PC-9 (cell line): ENCODE measurements at regions of chr5 and their contacts with region 1.

Region 1: GRCh38 chr5:171521219-171521633 is 101.8 kb downstream of the FGF18 start:
- DNase-seq: peak; percentile 82 to 96
- H3K4me3 ChIP-seq: peak overlapping the region; percentile 47; the same call in 1 of the 2 replicates
- H3K27ac ChIP-seq: peak overlapping the region; percentile 98
- H3K4me1 ChIP-seq: peaks cover 48% of the 10 kb centered on the region
- H3K27me3 ChIP-seq: no peaks in the 10 kb centered on the region
- CTCF ChIP-seq: peak; percentile 46; the same call in 1 of the 2 replicates

Region 2: DNA sequence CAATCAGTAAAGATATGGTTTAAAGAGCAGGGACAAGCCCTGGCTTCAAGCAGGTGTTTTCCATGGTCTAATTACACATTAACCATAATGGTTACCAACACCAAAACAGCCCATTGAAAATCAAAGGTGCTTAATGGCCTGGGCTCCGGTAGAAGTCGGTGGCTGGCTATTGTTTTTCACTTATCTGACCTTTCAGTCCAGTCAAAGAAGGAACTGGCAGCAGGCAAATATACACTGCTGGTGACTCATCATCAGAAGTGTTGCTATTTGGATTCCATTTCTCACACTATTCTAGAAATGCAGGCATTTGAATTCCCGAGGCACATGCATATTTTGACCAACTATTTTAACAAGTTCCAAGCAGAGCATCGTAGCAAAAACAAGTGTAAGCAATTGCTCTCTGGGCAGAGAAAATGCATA is 764.0 kb before region 1 on chr5:
- CTCF ChIA-PET with region 1: no interaction called
- POLR2A ChIA-PET with region 1: no interaction called
- intact Hi-C with region 1: loop called (anchors 10 kb)
- DNase-seq: peak; percentile 45 to 96
- H3K4me3 ChIP-seq: no peak overlapping the region
- H3K27ac ChIP-seq: peak overlapping the region; percentile 74
- H3K4me1 ChIP-seq: peaks cover 66% of the 10 kb centered on the region
- H3K27me3 ChIP-seq: no peaks in the 10 kb centered on the region
- CTCF ChIP-seq: no peak

Region 3: GRCh38 chr5:171242521-171242920 is 278.7 kb before region 1 on chr5:
- CTCF ChIA-PET with region 1: no interaction called
- POLR2A ChIA-PET with region 1: no interaction called
- intact Hi-C with region 1: no loop called
- DNase-seq: no peak
- H3K4me3 ChIP-seq: no peak overlapping the region
- H3K27ac ChIP-seq: no peak overlapping the region
- H3K4me1 ChIP-seq: no peaks in the 10 kb centered on the region
- H3K27me3 ChIP-seq: no peaks in the 10 kb centered on the region
- CTCF ChIP-seq: no peak

Region 4: DNA sequence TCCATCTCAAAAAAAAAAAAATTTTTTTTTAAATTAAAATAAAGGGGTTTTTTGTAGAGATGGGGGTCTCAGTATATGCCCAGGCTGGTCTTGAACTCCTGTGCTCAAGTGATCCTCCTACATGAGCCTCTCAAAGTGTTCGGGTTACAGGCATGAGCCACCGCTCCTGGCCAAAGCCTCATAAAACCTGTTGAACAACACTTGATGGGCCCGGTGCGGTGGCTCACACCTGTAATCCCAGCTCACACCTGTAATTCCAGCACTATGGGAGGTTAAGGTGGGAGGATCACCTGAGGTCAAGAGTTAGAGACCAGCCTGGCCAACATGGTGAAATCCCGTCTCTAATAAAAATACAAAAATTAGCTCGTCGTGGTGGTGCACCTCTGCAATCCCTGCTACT is 141.3 kb before region 1 on chr5:
- CTCF ChIA-PET with region 1: no interaction called
- POLR2A ChIA-PET with region 1: no interaction called
- intact Hi-C with region 1: no loop called
- DNase-seq: no peak
- H3K4me3 ChIP-seq: no peak overlapping the region
- H3K27ac ChIP-seq: no peak overlapping the region
- H3K4me1 ChIP-seq: no peaks in the 10 kb centered on the region
- H3K27me3 ChIP-seq: no peaks in the 10 kb centered on the region
- CTCF ChIP-seq: no peak

Region 5: GRCh38 chr5:171494452-171495121 is 26.6 kb before region 1 on chr5:
- CTCF ChIA-PET with region 1: interaction called, 5 read pairs
- POLR2A ChIA-PET with region 1: interaction called, 10 read pairs
- intact Hi-C with region 1: loop called (anchors 1 kb)
- DNase-seq: peak; percentile 87 to 91
- H3K4me3 ChIP-seq: peak overlapping the region; percentile 45; the same call in 1 of the 2 replicates
- H3K27ac ChIP-seq: peak overlapping the region; percentile 94
- H3K4me1 ChIP-seq: peaks cover 51% of the 10 kb centered on the region
- H3K27me3 ChIP-seq: no peaks in the 10 kb centered on the region
- CTCF ChIP-seq: no peak

Region 6: GRCh38 chr5:171534043-171534895 is 13.0 kb after region 1 on chr5:
- CTCF ChIA-PET with region 1: no interaction called
- POLR2A ChIA-PET with region 1: interaction called, 5 read pairs
- intact Hi-C with region 1: loop called (anchors 2 kb)
- DNase-seq: peak; percentile 70 to 85
- H3K4me3 ChIP-seq: no peak overlapping the region
- H3K27ac ChIP-seq: peak overlapping the region; percentile 72
- H3K4me1 ChIP-seq: peaks cover 56% of the 10 kb centered on the region
- H3K27me3 ChIP-seq: no peaks in the 10 kb centered on the region
- CTCF ChIP-seq: no peak

Region 7: GRCh38 chr5:171595801-171596231 is 74.6 kb after region 1 on chr5:
- CTCF ChIA-PET with region 1: no interaction called
- POLR2A ChIA-PET with region 1: no interaction called
- intact Hi-C with region 1: loop called (anchors 1 kb)
- DNase-seq: peak; percentile 20 to 80
- H3K4me3 ChIP-seq: no peak overlapping the region
- H3K27ac ChIP-seq: peak overlapping the region; percentile 52
- H3K4me1 ChIP-seq: peaks cover 19% of the 10 kb centered on the region
- H3K27me3 ChIP-seq: peaks cover 3% of the 10 kb centered on the region; the same call in 1 of the 2 replicates
- CTCF ChIP-seq: no peak

Region 8: DNA sequence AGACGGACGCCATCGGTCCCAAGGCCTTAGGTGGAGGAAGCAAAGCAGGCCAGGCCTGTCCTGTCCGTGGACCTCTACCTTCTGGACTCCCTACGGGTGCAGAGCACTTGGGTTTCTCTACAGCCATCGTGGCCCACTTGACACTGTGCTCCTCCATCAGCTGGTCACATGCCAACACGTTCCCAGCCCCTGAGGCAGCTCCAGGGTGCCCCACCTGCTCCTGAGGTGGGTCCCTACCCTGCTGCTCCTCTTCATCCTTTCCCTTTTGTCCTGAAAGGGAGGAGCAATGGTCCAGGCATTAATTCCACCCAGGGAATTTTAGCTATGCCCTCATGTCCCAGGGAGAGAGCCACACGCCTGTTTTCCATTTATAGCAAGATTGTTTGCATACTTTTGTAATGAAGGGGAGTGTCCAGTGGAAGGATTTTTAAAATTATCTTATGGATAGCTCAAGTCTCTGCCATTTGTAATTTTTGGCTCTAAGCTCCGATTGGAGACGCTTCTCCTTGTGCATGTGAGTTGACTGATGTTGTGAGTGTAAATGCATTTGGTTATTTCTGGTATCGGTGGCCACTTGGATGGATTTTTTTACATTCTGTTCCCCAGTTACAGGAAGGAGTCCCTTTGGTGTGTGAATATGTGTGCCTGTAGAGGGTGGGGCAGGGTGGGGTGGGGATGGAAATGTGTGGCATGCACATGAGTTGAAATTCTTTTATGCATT is 1430.7 kb after region 1 on chr5:
- CTCF ChIA-PET with region 1: no interaction called
- POLR2A ChIA-PET with region 1: interaction called, 11 read pairs
- intact Hi-C with region 1: no loop called
- DNase-seq: peak in 1 of 2 experiments; percentile 41
- H3K4me3 ChIP-seq: no peak overlapping the region
- H3K27ac ChIP-seq: 0 out of 2 replicates have a peak overlapping the region, but pooled peaks have one; percentile 11
- H3K4me1 ChIP-seq: peaks cover 6% of the 10 kb centered on the region
- H3K27me3 ChIP-seq: no peaks in the 10 kb centered on the region
- CTCF ChIP-seq: no peak